Dendritic cell treated with granulocyte-macrophage colony-stimulating factor and Interleukin-4, amounts not matched to agents 40 ng/mL and 50 ng/mL, for 4 days (primary cell): ENCODE measurements at regions of chr6 and their contacts with region 1.

Region 1: DNA sequence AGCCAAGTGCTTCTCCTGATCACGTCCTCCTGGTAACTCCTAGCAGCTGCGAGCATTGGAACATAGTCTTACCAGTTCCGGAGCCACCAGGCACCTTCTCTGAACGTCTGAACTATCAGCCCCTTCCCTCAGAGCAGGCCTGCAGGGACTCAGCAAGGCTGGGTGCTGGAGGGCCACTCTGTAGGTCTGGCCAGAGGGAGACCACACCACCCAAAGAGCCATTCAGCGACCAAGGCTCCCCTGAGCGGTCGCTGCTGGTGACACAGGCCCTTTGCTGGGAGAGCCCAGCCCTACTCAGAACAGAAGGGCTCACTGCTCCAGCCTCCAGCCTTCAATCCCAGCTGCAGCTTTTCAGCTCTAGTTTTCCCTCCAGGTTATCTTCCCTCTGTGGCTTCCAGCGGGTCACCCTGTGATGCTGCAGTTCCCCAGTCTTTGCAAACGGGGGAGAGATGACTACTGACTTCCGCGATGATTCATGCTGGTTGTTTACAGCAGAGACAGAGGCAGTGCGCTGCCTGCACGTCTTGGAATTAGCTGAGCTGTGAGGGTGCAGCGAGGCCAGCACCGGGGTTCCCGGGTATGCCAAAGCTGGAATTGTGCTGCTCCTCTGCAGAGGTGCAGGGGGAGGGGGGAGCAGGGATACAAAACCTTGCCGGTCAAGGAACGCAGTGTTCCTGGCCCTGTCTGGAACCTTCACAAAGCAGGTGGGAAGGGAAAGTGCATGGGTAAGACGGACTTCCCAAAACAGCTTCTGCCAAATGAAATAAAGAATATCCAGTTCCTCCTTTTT is 161.4 kb downstream of the LY86 start:
- H3K4me3 Mint-ChIP-seq: peak overlapping the region; percentile 74
- H3K27ac Mint-ChIP-seq: peak overlapping the region; percentile 91
- H3K4me1 Mint-ChIP-seq: peaks cover 66% of the 10 kb centered on the region
- H3K27me3 Mint-ChIP-seq: no peaks in the 10 kb centered on the region

Region 2: GRCh38 chr6:6712258-6712999 is 37.5 kb before region 1 on chr6:
- intact Hi-C with region 1: loop called (anchors 5 kb)
- H3K4me3 Mint-ChIP-seq: peak overlapping the region; percentile 39
- H3K27ac Mint-ChIP-seq: peak overlapping the region; percentile 72
- H3K4me1 Mint-ChIP-seq: peaks cover 90% of the 10 kb centered on the region
- H3K27me3 Mint-ChIP-seq: no peaks in the 10 kb centered on the region